Posterior vena cava (tissue), 2 donors: ENCODE measurements at regions of chr3 and their contacts with region 1.

Region 1: GRCh38 chr3:193959861-193960260 is 176.1 kb upstream of the HES1 start:
- DNase-seq: no peak

Region 2: DNA sequence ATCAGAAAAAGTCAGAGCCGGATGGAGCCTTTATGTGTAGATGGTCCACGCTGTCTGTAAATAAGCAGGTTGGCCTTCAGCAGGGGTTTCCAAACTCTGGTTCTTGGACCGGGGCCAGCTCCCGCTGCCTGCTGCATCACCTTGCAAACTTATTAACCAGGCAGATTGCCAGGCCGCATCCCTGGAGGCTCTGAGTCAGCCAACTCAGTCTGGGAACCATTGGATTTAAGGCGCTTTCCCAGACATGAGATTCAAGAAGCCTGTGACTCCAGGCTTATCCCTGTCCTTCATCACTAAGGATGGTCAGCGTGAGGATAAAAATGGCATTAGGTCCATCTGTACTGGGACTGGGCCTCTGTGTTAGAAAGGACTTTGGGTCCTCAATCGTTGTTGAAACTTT is 154.4 kb before region 1 on chr3:
- intact Hi-C with region 1: no loop called
- DNase-seq: no peak

Region 3: GRCh38 chr3:193872265-193872753 is 87.6 kb before region 1 on chr3:
- intact Hi-C with region 1: no loop called
- DNase-seq: no peak

Region 4: GRCh38 chr3:193983846-193984818 is 24.3 kb after region 1 on chr3:
- intact Hi-C with region 1: loop called in 1 of 2 experiments (anchors 1 kb)
- DNase-seq: no peak

Region 5: DNA sequence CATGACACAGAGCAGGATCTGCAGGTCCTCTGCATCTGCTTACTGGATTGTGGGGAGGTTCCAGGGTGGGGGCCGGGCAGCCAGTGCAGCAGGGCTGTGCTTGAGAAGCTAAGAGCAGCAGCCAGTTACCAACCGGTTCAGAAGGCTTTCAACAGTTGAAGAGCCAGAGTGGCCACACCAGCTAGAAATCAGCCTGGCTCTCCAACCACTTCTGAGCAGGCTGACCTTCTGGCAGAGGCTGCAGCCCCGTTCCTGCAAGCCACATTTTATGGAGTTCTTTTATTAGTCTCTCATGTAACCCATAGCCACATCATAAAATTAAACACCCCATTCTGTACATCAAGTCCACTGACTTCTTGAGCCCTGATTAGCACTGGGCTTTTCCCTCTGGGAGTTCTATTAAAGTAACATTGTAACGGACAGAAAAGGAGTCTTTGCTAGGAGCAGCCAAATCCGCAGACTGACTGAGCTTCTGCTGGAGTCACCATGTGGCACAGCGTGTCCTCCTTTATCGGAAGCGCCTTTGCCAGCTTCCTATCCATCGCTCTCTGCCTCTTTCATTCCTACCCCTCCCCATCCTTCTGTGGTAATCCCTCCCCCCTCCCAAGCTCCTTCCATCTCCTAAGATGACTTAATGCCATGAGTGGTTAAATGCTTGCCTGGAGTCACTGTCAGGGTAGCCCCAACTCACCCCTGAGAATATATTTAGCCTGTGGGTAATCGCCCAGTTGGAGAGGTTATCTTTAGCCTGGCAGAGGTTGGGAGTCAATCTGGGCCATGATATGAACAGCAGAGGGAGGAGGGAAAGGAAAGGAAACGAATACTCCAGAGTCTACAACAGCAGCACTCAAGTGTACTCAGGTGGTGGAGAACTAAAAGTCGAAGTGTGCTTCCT is 37.6 kb after region 1 on chr3:
- intact Hi-C with region 1: no loop called
- DNase-seq: no peak